PC-3 (cell line): ENCODE measurements at regions of chr9 and their contacts with region 1.

Region 1: GRCh38 chr9:132800038-132800648 is 77.9 kb downstream of the AK8 start:
- DNase-seq: peak; percentile 71
- ATAC-seq: peak; percentile 69
- H3K4me3 ChIP-seq: no peak overlapping the region
- H3K27ac ChIP-seq: no peak overlapping the region
- H3K4me1 ChIP-seq: peaks cover 3% of the 10 kb centered on the region; the same call in 1 of the 2 replicates
- H3K27me3 ChIP-seq: no peaks in the 10 kb centered on the region
- CTCF ChIP-seq: peak; percentile 79

Region 2: DNA sequence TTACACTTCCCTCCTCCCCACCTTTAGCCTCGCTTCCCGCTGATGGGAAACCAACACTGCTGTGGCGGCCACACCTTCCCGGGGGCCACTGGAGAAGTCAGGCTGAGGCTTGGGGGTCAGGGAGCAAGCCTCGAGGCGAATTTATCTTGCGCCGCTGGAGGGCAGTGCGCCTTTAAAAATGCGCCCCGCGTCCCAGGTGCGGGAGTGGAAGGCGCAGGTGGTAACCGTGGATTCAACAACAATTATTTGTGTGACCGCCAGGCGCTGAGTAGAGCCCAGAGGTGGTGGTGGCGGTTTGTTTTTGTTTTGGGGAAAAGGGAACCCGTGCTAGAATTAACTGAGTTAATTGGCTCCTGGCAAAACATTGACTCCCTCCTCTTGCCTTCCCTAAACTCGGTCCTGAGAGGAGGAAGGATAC is 389.0 kb before region 1 on chr9:
- CTCF ChIA-PET with region 1: no interaction called
- POLR2A ChIA-PET with region 1: no interaction called
- intact Hi-C with region 1: loop called (anchors 1 kb)
- DNase-seq: peak; percentile 73
- ATAC-seq: peak; percentile 38
- H3K4me3 ChIP-seq: peak overlapping the region; percentile 63
- H3K27ac ChIP-seq: no peak overlapping the region
- H3K4me1 ChIP-seq: peaks cover 12% of the 10 kb centered on the region
- H3K27me3 ChIP-seq: peaks cover 34% of the 10 kb centered on the region
- CTCF ChIP-seq: peak; percentile 73

Region 3: DNA sequence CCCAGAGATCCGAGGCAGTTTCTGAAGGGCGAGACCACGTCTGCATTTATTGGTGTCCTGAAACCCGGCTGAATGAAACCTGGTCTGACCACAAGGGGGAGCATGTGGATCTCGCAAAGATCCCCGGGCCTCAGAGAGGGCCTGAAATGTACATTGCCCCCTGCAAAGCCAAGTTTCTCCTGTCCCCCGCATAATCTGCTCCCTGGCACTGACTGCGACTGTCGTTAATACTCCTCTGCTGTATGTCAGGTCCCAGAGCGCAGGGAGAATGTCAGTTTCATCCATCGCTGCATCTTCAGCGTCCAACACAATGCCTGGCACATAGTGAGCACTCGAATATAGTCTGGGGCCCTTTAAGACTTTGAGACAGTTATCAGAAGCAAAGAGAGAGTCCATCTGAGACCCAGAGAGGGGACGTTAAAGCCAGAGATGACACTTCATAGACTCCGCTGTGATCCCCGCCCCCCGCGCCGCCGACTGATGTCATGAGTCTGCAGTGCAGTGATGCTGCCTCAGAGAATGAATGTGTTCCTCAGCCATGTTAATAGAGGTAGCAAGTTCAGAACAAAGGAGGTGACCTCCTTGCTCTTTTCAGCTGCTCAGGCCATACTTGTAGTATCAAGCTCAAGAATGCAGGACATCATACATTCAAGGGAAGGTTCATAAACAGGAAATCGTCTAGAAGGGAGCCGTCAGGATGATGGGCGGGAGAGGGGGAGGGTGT is 292.2 kb before region 1 on chr9:
- CTCF ChIA-PET with region 1: no interaction called
- POLR2A ChIA-PET with region 1: no interaction called
- intact Hi-C with region 1: loop called (anchors 1 kb)
- DNase-seq: peak; percentile 75
- ATAC-seq: peak; percentile 82
- H3K4me3 ChIP-seq: no peak overlapping the region
- H3K27ac ChIP-seq: no peak overlapping the region
- H3K4me1 ChIP-seq: no peaks in the 10 kb centered on the region
- H3K27me3 ChIP-seq: peaks cover 24% of the 10 kb centered on the region
- CTCF ChIP-seq: peak; percentile 81

Region 4: DNA sequence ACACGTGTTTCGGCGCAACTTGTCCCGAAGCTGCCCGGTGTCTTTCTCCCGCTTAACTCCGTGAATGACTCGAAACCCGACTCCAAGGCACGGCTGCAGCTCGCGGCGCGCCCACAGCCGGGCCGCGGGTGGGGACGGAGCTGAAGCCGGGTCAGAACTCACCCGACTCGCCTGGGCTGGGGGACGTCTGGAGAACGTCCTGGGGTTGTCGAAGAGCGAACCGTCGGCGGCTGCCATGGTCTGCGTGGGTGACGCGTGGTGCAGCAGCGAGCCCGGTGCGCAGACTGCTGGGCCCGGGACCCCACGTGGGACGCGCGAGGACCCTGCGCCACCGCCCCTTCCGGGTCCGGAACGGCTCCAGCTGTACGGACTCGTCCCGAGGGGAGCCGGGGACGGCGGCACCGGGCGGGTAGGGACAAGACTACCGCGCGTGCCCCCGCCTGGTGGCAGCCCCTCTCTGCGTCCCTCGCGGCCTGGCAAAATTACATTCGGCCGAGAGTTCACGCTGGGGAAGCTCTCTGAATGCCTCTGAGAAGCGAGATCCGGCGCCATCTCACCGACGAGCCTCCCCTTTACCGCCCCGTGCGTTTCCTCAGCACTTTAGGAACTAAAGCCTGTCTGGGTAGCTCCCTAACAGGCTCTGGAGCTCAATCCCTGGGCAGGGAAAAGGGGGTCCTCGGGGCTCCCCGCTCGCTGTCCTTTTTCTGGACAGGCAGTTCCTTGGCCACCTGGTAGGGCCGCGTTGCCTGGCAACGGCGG is 130.3 kb before region 1 on chr9 and contains the start of gene DDX31:
- CTCF ChIA-PET with region 1: no interaction called
- POLR2A ChIA-PET with region 1: no interaction called
- intact Hi-C with region 1: loop called (anchors 1 kb)
- DNase-seq: peak; percentile 65
- ATAC-seq: peak; percentile 75
- H3K4me3 ChIP-seq: peak within 1 kb of the TSS; percentile 91
- H3K27ac ChIP-seq: peak within 1 kb of the TSS; percentile 93
- H3K4me1 ChIP-seq: peaks cover 25% of the 10 kb centered on the region
- H3K27me3 ChIP-seq: no peaks in the 10 kb centered on the region
- CTCF ChIP-seq: no peak
- total RNA-seq, gene DDX31: 14.2 and 14.6 TPM in 2 replicates

Region 5: GRCh38 chr9:132679946-132680625 is 120.1 kb before region 1 on chr9:
- CTCF ChIA-PET with region 1: no interaction called
- POLR2A ChIA-PET with region 1: no interaction called
- intact Hi-C with region 1: no loop called
- DNase-seq: no peak
- ATAC-seq: no peak; the same call in 1 of the 2 replicates
- H3K4me3 ChIP-seq: no peak overlapping the region
- H3K27ac ChIP-seq: no peak overlapping the region
- H3K4me1 ChIP-seq: peaks cover 5% of the 10 kb centered on the region
- H3K27me3 ChIP-seq: no peaks in the 10 kb centered on the region
- CTCF ChIP-seq: no peak

Region 6: DNA sequence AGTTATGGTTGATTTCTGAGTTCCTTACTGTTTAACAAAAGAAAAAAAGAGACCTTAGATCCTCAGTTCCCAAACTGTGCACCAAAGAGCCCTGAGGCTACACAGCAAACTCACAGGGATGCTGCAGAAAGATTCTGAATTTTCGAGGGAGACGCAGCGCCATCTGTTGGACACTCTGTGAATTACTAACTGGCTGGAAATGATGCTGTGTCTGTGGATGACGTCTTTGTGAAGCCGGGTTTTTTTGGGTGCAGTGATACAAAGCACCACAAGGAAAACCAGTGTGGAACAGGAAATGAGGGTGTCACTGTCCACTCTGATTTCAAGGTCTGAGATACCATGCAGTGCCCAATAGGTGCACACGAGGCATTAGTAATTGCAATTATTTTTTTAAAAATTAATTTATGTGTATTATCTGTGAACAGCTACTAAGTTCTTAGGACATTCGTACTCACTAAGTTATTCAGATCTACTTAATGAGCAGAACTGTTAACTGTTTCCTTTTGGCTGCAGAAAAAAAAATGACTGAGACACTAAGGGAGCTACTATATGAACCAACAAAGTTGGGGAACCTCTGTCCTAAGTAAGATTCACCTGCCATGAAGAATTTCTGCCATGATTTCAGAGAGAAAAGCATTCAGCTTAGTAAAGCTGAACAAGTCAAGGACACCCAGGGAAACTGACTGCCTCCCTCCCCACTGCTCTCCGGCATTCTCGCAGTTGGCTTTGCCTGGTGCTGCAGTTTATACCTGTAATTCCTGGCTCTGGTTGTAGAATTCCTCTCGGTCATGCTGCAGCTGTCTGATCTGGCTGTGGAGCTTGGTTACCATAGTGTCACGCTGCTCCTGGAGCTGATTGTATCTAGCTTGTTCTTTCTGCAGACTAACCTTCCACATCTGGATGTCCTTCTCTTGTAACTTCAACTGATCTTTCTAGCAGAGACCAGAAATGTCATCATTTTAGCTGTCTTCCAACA is 102.0 kb after region 1 on chr9:
- CTCF ChIA-PET with region 1: no interaction called
- POLR2A ChIA-PET with region 1: no interaction called
- intact Hi-C with region 1: loop called (anchors 10 kb)
- DNase-seq: peak; percentile 86
- ATAC-seq: peak; percentile 93
- H3K4me3 ChIP-seq: no peak overlapping the region
- H3K27ac ChIP-seq: no peak overlapping the region
- H3K4me1 ChIP-seq: no peaks in the 10 kb centered on the region
- H3K27me3 ChIP-seq: no peaks in the 10 kb centered on the region
- CTCF ChIP-seq: peak; percentile 88

Region 7: GRCh38 chr9:133286523-133286922 is 486.4 kb after region 1 on chr9:
- CTCF ChIA-PET with region 1: no interaction called
- POLR2A ChIA-PET with region 1: no interaction called
- intact Hi-C with region 1: no loop called
- DNase-seq: peak; percentile 3
- ATAC-seq: no peak
- H3K4me3 ChIP-seq: no peak overlapping the region
- H3K27ac ChIP-seq: no peak overlapping the region
- H3K4me1 ChIP-seq: no peaks in the 10 kb centered on the region
- H3K27me3 ChIP-seq: peaks cover 10% of the 10 kb centered on the region; the same call in 1 of the 2 replicates
- CTCF ChIP-seq: no peak